ENCODE measurements at regions of chr1 and their contacts with region 1.

Region 1: DNA sequence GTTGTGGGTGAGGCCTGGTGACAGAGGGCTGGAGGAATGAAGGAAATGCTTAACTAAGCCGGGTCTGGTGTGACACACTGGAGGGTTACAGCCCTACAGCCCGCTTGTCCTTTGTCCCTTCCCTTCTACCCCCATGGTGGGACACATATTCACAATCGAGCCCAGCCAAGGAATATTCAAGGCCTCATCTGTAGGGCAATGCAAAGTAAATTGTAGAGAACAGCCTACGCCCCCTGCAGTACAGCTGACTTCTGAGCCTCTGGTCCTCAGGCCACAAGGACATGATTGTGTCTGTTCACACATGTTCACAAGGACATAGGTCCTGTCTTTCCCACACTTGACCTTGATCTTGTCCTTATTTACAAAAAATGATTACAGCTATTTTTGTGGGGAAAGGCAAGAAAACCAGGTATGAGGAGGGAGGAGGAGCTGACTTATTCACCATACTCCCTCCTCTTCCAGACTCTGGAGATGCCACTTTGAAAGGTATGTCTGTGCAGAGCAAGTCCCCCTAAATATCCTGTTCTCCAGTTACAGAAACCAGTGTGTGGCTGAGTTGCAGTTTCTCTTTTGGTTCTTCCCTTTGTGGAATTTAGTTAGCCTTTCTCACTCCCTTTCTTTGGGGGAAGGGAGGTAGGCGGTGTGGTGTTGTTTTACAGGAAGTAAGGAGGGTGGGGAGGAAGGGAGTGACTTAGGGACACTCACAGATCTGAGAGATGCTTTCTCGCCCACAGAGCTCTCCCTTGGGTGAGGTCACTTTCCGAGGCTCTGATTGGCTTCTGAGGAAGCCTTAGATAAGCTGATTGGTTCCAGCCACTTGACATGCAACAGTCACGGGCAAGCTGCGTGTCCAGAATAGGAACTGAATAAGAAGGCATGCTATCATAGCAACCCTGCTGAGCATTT is 14.6 kb downstream of the POLR3GL start:
- DNase-seq: peak; percentile 99
- ATAC-seq: peak; percentile 92
- H3K4me3 ChIP-seq: no peak overlapping the region; the same call in 1 of the 2 replicates
- H3K27ac ChIP-seq: peak overlapping the region; percentile 99
- H3K4me1 ChIP-seq: peaks cover 54% of the 10 kb centered on the region
- H3K27me3 ChIP-seq: no peaks in the 10 kb centered on the region
- CTCF ChIP-seq: peak; percentile 34 to 42 (median 35); a peak in 4 of 6 replicates
- EP300 ChIP-seq: peak; percentile 34 to 71; a peak in 1 of 4 replicates
- POLR2A ChIP-seq: no peak; the same call in none of the 2 replicates
- RAD21 ChIP-seq: no peak

Region 2: DNA sequence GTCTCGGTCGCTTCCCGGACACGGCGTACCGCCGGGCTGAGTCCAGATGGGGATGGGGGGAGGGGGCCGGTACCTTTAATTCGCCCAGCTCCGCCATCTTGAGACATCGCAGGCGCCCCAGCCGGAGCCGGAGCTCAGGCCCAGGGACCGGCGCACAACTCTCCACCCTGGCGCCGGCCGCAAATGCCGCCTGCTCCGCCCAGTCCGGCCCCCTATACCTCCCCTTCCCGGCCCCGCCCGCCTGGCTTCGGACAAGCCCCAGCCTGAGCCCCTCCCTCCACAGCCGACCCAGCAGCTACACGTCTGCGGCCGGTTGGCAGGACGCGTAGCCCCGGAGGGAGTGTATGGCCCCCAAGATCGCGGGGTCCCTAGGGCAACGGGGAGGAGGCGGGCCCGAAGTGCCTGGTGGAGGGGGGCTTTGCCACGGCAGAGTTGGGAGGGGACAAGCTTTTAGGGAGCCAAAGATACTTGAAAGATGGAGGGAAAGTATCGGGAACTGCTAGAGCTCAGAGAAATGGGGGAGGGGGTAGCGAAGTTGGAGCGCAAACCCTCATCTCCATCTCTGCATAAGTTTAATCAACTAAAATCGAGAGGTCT is 120.1 kb before region 1 on chr1 and contains the start of gene PIAS3:
- CTCF ChIA-PET with region 1: interaction called, 19 read pairs
- POLR2A ChIA-PET with region 1: interaction called, 12 read pairs
- RAD21 ChIA-PET with region 1: interaction called, 36 read pairs
- SMC1A ChIA-PET with region 1: interaction called, 6 read pairs
- in situ Hi-C with region 1: no loop called
- intact Hi-C with region 1: no loop called
- DNase-seq: peak; percentile 65
- ATAC-seq: peak; percentile 93
- H3K4me3 ChIP-seq: peak within 1 kb of the TSS; percentile 82
- H3K27ac ChIP-seq: peak within 1 kb of the TSS; percentile 67
- H3K4me1 ChIP-seq: no peaks in the 10 kb centered on the region
- H3K27me3 ChIP-seq: no peaks in the 10 kb centered on the region
- CTCF ChIP-seq: no peak
- EP300 ChIP-seq: 0 out of 4 replicates have a peak, but pooled peaks of 1 of the 2 experiments have one; percentile 12
- POLR2A ChIP-seq: peak; percentile 68
- RAD21 ChIP-seq: no peak
- polyA plus RNA-seq, gene PIAS3: 0.85 to 1.6 TPM

Region 3: DNA sequence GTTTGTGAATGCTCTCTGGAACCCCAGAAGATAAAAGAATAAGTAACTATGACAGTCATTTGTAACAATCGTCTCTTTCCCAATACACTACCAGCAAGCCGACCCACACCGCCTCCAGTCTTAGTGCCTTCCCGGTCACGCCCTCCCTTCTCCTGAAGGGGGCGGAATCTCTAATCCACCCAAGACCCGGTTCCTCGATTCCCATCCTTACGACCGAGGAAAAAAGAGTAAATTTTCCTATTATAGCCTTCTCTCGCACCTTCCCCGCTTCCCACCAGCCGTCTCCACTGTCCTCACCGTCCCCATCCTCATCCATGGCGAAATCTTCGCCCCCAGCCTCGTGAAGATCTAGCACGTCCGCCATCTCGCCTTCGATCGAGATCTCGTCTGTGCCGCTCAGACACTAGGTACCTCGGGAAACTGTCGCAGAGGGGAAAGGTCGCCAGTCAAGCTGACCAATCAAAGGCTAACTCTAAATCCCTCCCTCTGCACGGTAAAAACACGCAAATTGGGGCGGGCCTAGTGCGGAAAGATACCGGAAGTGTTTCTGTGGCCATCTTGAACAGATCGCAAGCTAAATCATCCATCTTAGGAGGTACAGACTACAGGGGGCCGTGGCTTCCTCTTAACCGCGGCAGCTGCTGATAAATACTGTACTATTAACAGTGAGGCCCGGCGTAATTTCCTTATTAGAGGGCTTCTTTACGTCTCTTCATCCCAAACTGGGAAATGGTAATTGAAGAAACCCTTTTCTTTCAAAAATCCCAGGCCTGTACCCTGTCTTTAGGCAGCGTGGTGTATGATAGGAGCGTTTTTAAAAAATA is 51.8 kb before region 1 on chr1 and contains the start of gene RBM8A:
- CTCF ChIA-PET with region 1: interaction called, 24 read pairs
- POLR2A ChIA-PET with region 1: interaction called, 10 read pairs
- RAD21 ChIA-PET with region 1: interaction called, 18 read pairs
- SMC1A ChIA-PET with region 1: interaction called, 27 read pairs
- in situ Hi-C with region 1: no loop called
- intact Hi-C with region 1: no loop called
- DNase-seq: peak; percentile 99
- ATAC-seq: peak; percentile 98
- H3K4me3 ChIP-seq: peak within 1 kb of the TSS; percentile 90
- H3K27ac ChIP-seq: peak within 1 kb of the TSS; percentile 97
- H3K4me1 ChIP-seq: peaks cover 6% of the 10 kb centered on the region; the same call in 1 of the 2 replicates
- H3K27me3 ChIP-seq: no peaks in the 10 kb centered on the region
- CTCF ChIP-seq: peak; percentile 37 to 67 (median 58)
- EP300 ChIP-seq: 0 out of 4 replicates have a peak, but pooled peaks of 1 of the 2 experiments have one; percentile 11
- POLR2A ChIP-seq: peak; percentile 95
- RAD21 ChIP-seq: no peak
- polyA plus RNA-seq, gene RBM8A: 665 to 1,248 TPM

Region 4: DNA sequence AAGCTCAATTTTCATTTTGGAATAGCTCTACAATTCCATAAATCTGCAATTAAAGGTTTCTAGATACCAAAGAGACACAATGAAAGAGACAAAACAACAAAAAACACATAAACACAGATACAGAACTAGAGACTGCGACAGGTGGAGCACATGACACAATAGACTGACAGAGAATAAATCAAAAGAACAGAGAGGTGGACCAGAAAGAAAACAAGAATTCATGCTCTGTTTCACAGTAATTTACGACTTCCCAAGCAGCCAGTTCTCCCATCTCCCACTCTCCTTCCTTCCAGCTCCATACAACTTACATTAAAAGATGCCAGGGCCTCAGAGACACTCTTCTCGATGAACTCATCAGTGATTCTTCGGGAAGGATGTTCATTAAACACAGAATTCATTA is 36.7 kb before region 1 on chr1:
- CTCF ChIA-PET with region 1: no interaction called
- POLR2A ChIA-PET with region 1: no interaction called
- RAD21 ChIA-PET with region 1: no interaction called
- SMC1A ChIA-PET with region 1: no interaction called
- in situ Hi-C with region 1: no loop called
- intact Hi-C with region 1: no loop called
- DNase-seq: no peak
- ATAC-seq: no peak
- H3K4me3 ChIP-seq: no peak overlapping the region
- H3K27ac ChIP-seq: no peak overlapping the region
- H3K4me1 ChIP-seq: no peaks in the 10 kb centered on the region
- H3K27me3 ChIP-seq: no peaks in the 10 kb centered on the region
- CTCF ChIP-seq: no peak
- EP300 ChIP-seq: no peak
- POLR2A ChIP-seq: no peak
- RAD21 ChIP-seq: no peak

Region 5: DNA sequence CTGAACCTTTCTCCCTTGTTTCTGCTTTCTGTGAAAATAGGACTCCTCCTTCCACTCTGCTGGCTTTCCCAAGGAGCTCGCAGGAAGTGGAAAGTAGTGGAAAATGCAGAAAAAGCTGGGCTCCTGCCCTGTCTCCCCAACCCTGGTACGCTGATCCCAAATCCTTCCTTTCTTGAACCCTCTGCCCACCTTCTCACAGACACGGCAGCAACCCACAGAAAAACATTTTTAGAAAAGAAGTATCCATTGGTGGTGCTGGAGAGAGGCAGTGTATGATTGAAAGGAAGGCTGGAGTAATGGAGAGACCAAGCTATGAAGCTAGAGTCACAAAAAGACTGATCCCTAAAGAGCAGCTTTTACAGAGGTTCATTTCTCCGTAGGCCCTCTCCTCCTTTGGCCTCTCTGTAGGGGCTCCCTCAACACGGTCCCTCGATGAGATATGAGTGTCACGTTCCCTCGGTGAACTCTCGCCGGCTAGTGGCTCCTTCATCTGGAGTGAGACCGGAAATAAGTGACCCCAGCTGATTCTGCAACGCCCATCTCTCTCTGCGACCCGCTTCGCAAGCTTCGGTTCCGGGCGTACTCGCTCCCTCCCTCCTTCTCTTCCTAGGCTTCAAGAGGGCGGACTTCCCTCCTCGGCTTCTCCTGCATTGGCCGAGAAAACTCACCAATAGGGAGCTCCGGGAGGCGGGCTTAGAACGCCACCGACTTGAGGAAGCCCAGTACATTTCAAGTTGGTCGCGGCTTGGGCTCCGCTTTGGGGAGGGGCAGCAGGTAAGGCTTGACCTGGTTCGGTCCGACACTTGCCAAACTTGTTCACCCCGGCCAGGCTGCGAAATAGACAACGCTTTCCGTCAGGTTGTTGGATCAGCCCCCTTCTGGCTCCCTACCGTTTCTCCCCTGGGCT is 14.9 kb before region 1 on chr1 and contains the starts of genes ANKRD34A and POLR3GL:
- CTCF ChIA-PET with region 1: interaction called, 65 read pairs
- POLR2A ChIA-PET with region 1: interaction called, 102 read pairs
- RAD21 ChIA-PET with region 1: interaction called, 100 read pairs
- SMC1A ChIA-PET with region 1: interaction called, 93 read pairs
- in situ Hi-C with region 1: no loop called
- intact Hi-C with region 1: loop called (anchors 2 kb)
- DNase-seq: peak; percentile 80
- ATAC-seq: peak; percentile 95
- H3K4me3 ChIP-seq: peak within 1 kb of the TSS; percentile 79
- H3K27ac ChIP-seq: peak within 1 kb of the TSS; percentile 73
- H3K4me1 ChIP-seq: peaks cover 19% of the 10 kb centered on the region
- H3K27me3 ChIP-seq: no peaks in the 10 kb centered on the region; a peak in 1 of 4 replicates
- CTCF ChIP-seq: no peak
- EP300 ChIP-seq: no peak
- POLR2A ChIP-seq: peak; percentile 98
- RAD21 ChIP-seq: no peak
- polyA plus RNA-seq, gene ANKRD34A: 0.40 to 0.42 TPM
- polyA plus RNA-seq, gene POLR3GL: 12.8 to 25.5 TPM

Region 6: DNA sequence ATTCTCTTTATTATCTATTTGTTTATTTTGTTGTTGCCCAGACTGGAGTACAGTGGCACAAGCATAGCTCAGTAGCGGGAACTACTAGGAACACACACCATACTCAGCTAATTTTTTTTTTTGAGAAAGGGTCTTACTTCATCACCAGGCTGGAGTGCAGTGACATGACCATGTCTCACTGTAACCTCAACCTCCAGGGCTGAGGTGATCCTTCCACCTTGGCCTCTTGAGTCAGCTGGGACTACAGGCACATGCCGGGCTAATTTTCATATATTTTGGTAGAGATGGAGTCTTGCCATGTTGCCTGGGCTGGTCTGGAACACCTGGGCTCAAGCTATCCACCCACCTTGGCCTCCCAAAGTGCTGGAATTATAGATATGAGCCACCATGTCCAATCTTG is 22.6 kb after region 1 on chr1:
- CTCF ChIA-PET with region 1: interaction called, 361 read pairs
- POLR2A ChIA-PET with region 1: interaction called, 82 read pairs
- RAD21 ChIA-PET with region 1: interaction called, 136 read pairs
- SMC1A ChIA-PET with region 1: interaction called, 244 read pairs
- in situ Hi-C with region 1: loop called (anchors 5 kb)
- intact Hi-C with region 1: no loop called
- DNase-seq: no peak
- ATAC-seq: no peak
- H3K4me3 ChIP-seq: no peak overlapping the region
- H3K27ac ChIP-seq: no peak overlapping the region
- H3K4me1 ChIP-seq: peaks cover 8% of the 10 kb centered on the region
- H3K27me3 ChIP-seq: no peaks in the 10 kb centered on the region
- CTCF ChIP-seq: no peak
- EP300 ChIP-seq: no peak
- POLR2A ChIP-seq: no peak
- RAD21 ChIP-seq: no peak

Region 7: GRCh38 chr1:146012737-146013403 is 33.8 kb after region 1 on chr1:
- CTCF ChIA-PET with region 1: interaction called, 361 read pairs
- POLR2A ChIA-PET with region 1: interaction called, 17 read pairs
- RAD21 ChIA-PET with region 1: interaction called, 136 read pairs
- SMC1A ChIA-PET with region 1: interaction called, 180 read pairs
- in situ Hi-C with region 1: loop called (anchors 5 kb)
- intact Hi-C with region 1: loop called (anchors 1 kb)
- DNase-seq: no peak
- ATAC-seq: peak; percentile 84
- H3K4me3 ChIP-seq: no peak overlapping the region
- H3K27ac ChIP-seq: no peak overlapping the region
- H3K4me1 ChIP-seq: no peaks in the 10 kb centered on the region
- H3K27me3 ChIP-seq: peaks cover 0 to 1% of the 10 kb centered on the region in 2 experiments; a peak in 3 of 4 replicates
- CTCF ChIP-seq: peak; percentile 68 to 89 (median 76); a peak in 5 of 6 replicates
- EP300 ChIP-seq: no peak
- POLR2A ChIP-seq: no peak
- RAD21 ChIP-seq: peak; percentile 98

Region 8: DNA sequence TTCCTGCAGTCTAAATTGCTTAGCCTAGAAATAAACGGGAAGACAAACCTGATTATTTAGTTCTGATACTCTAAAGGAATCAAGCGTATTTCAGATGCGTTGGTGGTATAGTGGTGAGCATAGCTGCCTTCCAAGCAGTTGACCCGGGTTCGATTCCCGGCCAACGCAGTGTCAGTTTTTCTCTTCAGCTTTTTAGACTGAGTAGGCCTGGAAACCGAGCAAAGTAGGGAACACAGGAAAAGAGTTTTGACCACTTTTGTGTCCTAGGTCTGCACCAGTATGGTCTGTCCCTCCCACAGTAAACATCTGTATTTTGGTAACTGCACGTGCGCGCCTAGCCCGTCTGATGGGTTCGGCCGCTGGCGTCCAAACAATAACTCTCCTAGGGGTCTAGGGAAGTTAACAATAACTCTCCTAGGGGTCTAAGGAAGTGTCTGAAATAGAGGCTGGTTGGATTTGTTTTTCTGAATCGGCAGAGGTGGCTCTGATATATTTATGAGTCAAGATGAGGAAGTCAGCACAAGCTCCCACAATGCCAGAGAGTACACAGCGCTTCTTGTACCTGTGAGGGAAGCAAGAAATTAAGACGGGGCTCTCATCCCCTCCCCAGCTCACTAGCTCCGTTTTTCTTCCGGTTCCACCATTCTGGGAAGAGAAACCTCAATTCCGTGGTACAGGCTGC is 58.0 kb after region 1 on chr1:
- CTCF ChIA-PET with region 1: interaction called, 70 read pairs
- POLR2A ChIA-PET with region 1: interaction called, 11 read pairs
- RAD21 ChIA-PET with region 1: interaction called, 33 read pairs
- SMC1A ChIA-PET with region 1: interaction called, 60 read pairs
- in situ Hi-C with region 1: no loop called
- intact Hi-C with region 1: no loop called
- DNase-seq: peak; percentile 87
- ATAC-seq: peak; percentile 62
- H3K4me3 ChIP-seq: peak overlapping the region; percentile 90
- H3K27ac ChIP-seq: peak overlapping the region; percentile 79
- H3K4me1 ChIP-seq: no peaks in the 10 kb centered on the region; the same call in 1 of the 2 replicates
- H3K27me3 ChIP-seq: no peaks in the 10 kb centered on the region
- CTCF ChIP-seq: no peak
- EP300 ChIP-seq: peak in 1 of 2 experiments; percentile 77; a peak in 1 of 4 replicates
- POLR2A ChIP-seq: peak; percentile 15; the same call in 1 of the 2 replicates
- RAD21 ChIP-seq: no peak

Measured in GM12878 (cell line).